HCT116 (cell line): ENCODE measurements at regions of chr3 and their contacts with region 1.

Region 1: DNA sequence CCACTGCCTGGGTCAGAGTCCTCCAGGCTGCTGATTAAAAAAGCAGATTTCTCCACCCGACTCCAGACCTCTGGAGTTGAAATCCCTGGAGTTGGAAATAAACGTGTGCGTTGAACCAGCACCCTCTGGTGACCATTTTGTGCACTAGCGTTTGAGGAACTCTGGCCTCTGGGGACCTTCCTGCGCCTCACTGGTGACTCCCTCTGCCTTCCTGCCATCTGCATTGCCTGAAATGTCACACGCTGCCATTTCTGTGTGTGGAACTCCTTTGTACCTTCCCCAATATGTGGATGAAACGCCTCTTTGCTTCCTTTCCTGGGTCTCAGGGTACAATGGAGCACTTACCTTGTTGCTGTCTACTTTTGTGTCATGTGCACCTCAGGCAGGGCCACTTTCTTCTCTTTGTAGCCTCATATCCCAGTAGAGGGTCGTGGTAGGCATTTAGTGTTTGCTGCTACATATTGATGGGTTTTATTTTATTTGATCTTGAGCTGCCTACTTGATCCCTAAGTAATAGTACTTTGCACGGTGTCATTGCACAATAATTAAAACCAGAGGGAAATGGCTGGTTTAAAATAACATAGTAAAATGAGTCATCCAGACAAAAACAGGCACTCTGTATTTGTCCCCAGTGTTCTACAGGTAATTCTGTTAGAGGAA is 56.8 kb downstream of the GPR171 start:
- DNase-seq: peak; percentile 71
- ATAC-seq: peak; percentile 98
- H3K4me3 ChIP-seq: no peak overlapping the region
- H3K27ac ChIP-seq: no peak overlapping the region
- H3K4me1 ChIP-seq: peaks cover 6 to 11% of the 10 kb centered on the region in 2 experiments; a peak in 2 of 4 replicates
- H3K27me3 ChIP-seq: no peaks in the 10 kb centered on the region
- CTCF ChIP-seq: peak; percentile 84 to 96 (median 92)
- POLR2A ChIP-seq: no peak
- RAD21 ChIP-seq: peak; percentile 98

Region 2: GRCh38 chr3:150528354-150528797 is 617.8 kb before region 1 on chr3:
- CTCF ChIA-PET with region 1: interaction called, 3 read pairs
- POLR2A ChIA-PET with region 1: no interaction called
- RAD21 ChIA-PET with region 1: no interaction called
- intact Hi-C with region 1: loop called (anchors 2 kb)
- DNase-seq: no peak
- ATAC-seq: no peak; the same call in 1 of the 2 replicates
- H3K4me3 ChIP-seq: no peak overlapping the region
- H3K27ac ChIP-seq: no peak overlapping the region
- H3K4me1 ChIP-seq: no peaks in the 10 kb centered on the region
- H3K27me3 ChIP-seq: no peaks in the 10 kb centered on the region
- CTCF ChIP-seq: peak; percentile 18 to 44 (median 35); a peak in 2 of 6 replicates
- POLR2A ChIP-seq: no peak
- RAD21 ChIP-seq: peak; percentile 65

Region 3: DNA sequence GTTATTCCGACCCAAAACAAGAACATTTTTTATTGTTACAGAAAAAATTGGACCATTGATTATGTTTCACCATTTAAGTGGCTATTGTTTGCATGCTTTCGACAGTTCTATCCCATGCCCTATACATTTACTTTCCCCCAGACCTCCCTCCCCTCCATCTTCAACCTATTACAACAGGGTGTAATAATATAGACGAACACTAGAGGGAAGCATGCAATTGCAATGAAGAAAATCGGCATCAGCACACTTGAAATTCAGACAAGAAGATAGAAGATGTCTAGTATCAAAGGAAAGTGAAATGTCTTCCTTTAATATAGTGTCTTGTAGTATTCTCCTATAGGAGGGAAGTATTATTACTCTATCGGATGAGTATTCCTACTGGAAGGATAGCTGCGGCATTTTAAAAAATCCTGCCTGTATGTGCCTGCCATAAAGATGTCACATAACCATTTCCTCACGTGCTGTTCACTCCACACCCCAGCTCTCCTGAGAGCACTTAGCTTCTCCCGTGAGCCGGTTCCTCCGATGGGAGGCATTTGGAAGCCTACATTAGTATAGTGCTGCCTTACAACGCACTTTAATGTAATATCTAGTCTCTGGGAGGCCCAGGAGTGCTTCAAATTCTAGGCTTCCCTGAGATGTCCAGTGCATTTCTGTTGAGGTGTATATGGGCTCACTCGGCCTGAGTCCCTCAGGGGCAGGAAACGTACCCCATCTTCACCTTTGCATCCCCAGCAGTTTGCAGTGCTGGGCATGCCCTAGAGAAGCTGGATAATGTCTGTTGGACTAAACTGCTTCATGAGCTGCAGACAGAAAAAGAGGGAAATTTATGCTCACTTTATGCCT is 424.7 kb before region 1 on chr3:
- CTCF ChIA-PET with region 1: no interaction called
- POLR2A ChIA-PET with region 1: no interaction called
- RAD21 ChIA-PET with region 1: no interaction called
- intact Hi-C with region 1: loop called (anchors 5 kb)
- DNase-seq: peak; percentile 45
- ATAC-seq: peak; percentile 83
- H3K4me3 ChIP-seq: no peak overlapping the region
- H3K27ac ChIP-seq: no peak overlapping the region
- H3K4me1 ChIP-seq: peaks cover 0 to 11% of the 10 kb centered on the region in 2 experiments; a peak in 3 of 4 replicates
- H3K27me3 ChIP-seq: no peaks in the 10 kb centered on the region
- CTCF ChIP-seq: peak; percentile 69 to 91 (median 90)
- POLR2A ChIP-seq: no peak
- RAD21 ChIP-seq: peak; percentile 94

Region 4: GRCh38 chr3:150787741-150788370 is 358.3 kb before region 1 on chr3:
- CTCF ChIA-PET with region 1: interaction called, 4 read pairs
- POLR2A ChIA-PET with region 1: no interaction called
- RAD21 ChIA-PET with region 1: no interaction called
- intact Hi-C with region 1: loop called (anchors 5 kb)
- DNase-seq: peak; percentile 69
- ATAC-seq: peak; percentile 95
- H3K4me3 ChIP-seq: no peak overlapping the region
- H3K27ac ChIP-seq: no peak overlapping the region
- H3K4me1 ChIP-seq: peaks cover 0 to 14% of the 10 kb centered on the region in 2 experiments; a peak in 2 of 4 replicates
- H3K27me3 ChIP-seq: no peaks in the 10 kb centered on the region
- CTCF ChIP-seq: peak; percentile 81 to 98 (median 94)
- POLR2A ChIP-seq: no peak
- RAD21 ChIP-seq: peak; percentile 92

Region 5: GRCh38 chr3:150870396-150870795 is 275.8 kb before region 1 on chr3:
- CTCF ChIA-PET with region 1: no interaction called
- POLR2A ChIA-PET with region 1: no interaction called
- RAD21 ChIA-PET with region 1: no interaction called
- intact Hi-C with region 1: loop called (anchors 5 kb)
- DNase-seq: no peak
- ATAC-seq: no peak
- H3K4me3 ChIP-seq: no peak overlapping the region
- H3K27ac ChIP-seq: no peak overlapping the region
- H3K4me1 ChIP-seq: no peaks in the 10 kb centered on the region; a peak in 1 of 4 replicates
- H3K27me3 ChIP-seq: no peaks in the 10 kb centered on the region
- CTCF ChIP-seq: no peak
- POLR2A ChIP-seq: no peak
- RAD21 ChIP-seq: no peak

Region 6: GRCh38 chr3:150925751-150926201 is 220.4 kb before region 1 on chr3:
- CTCF ChIA-PET with region 1: interaction called, 4 read pairs
- POLR2A ChIA-PET with region 1: no interaction called
- RAD21 ChIA-PET with region 1: no interaction called
- intact Hi-C with region 1: loop called (anchors 1 kb)
- DNase-seq: peak; percentile 42
- ATAC-seq: peak; percentile 97
- H3K4me3 ChIP-seq: peak overlapping the region in 1 of 2 experiments; percentile 19; a peak in 1 of 4 replicates
- H3K27ac ChIP-seq: no peak overlapping the region
- H3K4me1 ChIP-seq: peaks cover 0 to 10% of the 10 kb centered on the region in 2 experiments; a peak in 2 of 4 replicates
- H3K27me3 ChIP-seq: no peaks in the 10 kb centered on the region; the same call in 1 of the 2 replicates
- CTCF ChIP-seq: peak; percentile 86 to 88 (median 88)
- POLR2A ChIP-seq: no peak
- RAD21 ChIP-seq: peak; percentile 91

Region 7: GRCh38 chr3:150996731-150997130 is 149.5 kb before region 1 on chr3:
- CTCF ChIA-PET with region 1: no interaction called
- POLR2A ChIA-PET with region 1: no interaction called
- RAD21 ChIA-PET with region 1: no interaction called
- intact Hi-C with region 1: no loop called
- DNase-seq: no peak
- ATAC-seq: no peak
- H3K4me3 ChIP-seq: no peak overlapping the region
- H3K27ac ChIP-seq: no peak overlapping the region
- H3K4me1 ChIP-seq: no peaks in the 10 kb centered on the region
- H3K27me3 ChIP-seq: no peaks in the 10 kb centered on the region
- CTCF ChIP-seq: no peak
- POLR2A ChIP-seq: no peak
- RAD21 ChIP-seq: no peak

Region 8: GRCh38 chr3:151008699-151009098 is 137.5 kb before region 1 on chr3:
- CTCF ChIA-PET with region 1: interaction called, 12 read pairs
- POLR2A ChIA-PET with region 1: no interaction called
- RAD21 ChIA-PET with region 1: no interaction called
- intact Hi-C with region 1: loop called (anchors 1 kb)
- DNase-seq: peak; percentile 13
- ATAC-seq: peak; percentile 59
- H3K4me3 ChIP-seq: no peak overlapping the region
- H3K27ac ChIP-seq: no peak overlapping the region
- H3K4me1 ChIP-seq: peaks cover 0 to 1% of the 10 kb centered on the region in 2 experiments; a peak in 2 of 4 replicates
- H3K27me3 ChIP-seq: no peaks in the 10 kb centered on the region
- CTCF ChIP-seq: peak; percentile 24 to 33 (median 25); a peak in 4 of 6 replicates
- POLR2A ChIP-seq: no peak
- RAD21 ChIP-seq: peak; percentile 66